Activated B cell treated with CpG ODN at 0.5 μM for 24 hours (primary cell): ENCODE measurements at regions of chr12 and their contacts with region 1.

Region 1: DNA sequence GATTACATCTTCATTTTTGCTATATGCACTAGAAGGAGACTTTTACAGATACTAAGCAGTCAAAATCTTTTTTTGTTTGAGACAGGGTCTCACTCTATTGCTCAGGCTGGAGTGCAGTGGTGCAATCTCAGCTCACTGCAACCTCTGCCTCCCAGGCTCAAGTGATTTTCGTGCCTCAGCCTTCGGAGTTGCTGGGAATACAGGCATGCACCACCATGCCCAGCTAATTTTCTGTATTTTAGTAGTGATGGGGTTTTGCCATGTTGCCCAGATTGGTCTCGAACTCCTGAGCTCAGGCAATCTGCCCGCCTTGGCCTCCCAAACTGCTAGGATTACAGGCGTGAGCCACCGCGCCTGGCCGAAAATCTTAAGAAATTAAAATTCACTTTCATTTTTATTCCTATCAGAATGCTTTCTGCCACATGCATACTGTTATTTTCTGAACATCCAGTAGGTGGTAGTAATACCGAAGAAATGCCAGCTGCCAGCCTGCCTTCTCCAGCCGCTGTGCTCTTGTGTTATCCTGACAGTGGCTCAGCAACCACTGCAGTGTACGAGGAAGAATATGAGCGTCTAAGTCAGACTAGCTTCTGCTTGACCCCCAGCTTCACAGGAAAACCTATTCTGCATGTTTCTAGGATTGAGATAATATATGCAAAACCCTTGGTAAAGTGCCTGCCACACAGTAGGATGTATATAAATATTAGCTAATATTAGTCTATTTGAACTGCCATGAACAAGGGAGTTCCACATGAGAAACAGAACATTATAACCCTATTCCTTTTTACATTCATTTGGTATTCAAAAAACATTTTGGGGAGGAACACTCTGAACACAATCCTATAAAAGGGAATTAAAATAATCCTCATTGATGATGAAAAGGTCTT is 54.2 kb downstream of the RPAP3 start:
- DNase-seq: no peak
- ATAC-seq: peak; percentile 90
- H3K4me3 Mint-ChIP-seq: no peak overlapping the region
- H3K27ac Mint-ChIP-seq: peak overlapping the region; percentile 35
- H3K4me1 Mint-ChIP-seq: peaks cover 15% of the 10 kb centered on the region
- H3K27me3 Mint-ChIP-seq: no peaks in the 10 kb centered on the region
- CTCF ChIP-seq: no peak

Region 2: GRCh38 chr12:46650607-46651088 is 1001.0 kb before region 1 on chr12:
- CTCF ChIA-PET with region 1: no interaction called
- POLR2A ChIA-PET with region 1: no interaction called
- intact Hi-C with region 1: no loop called
- DNase-seq: no peak
- ATAC-seq: no peak
- H3K4me3 Mint-ChIP-seq: no peak overlapping the region
- H3K27ac Mint-ChIP-seq: no peak overlapping the region
- H3K4me1 Mint-ChIP-seq: no peaks in the 10 kb centered on the region
- H3K27me3 Mint-ChIP-seq: no peaks in the 10 kb centered on the region
- CTCF ChIP-seq: no peak

Region 3: GRCh38 chr12:47307680-47308399 is 343.8 kb before region 1 on chr12:
- CTCF ChIA-PET with region 1: no interaction called
- POLR2A ChIA-PET with region 1: no interaction called
- intact Hi-C with region 1: no loop called
- DNase-seq: peak; percentile 33
- ATAC-seq: peak; percentile 88
- H3K4me3 Mint-ChIP-seq: peak overlapping the region; percentile 95
- H3K27ac Mint-ChIP-seq: peak overlapping the region; percentile 94
- H3K4me1 Mint-ChIP-seq: peaks cover 67% of the 10 kb centered on the region
- H3K27me3 Mint-ChIP-seq: no peaks in the 10 kb centered on the region
- CTCF ChIP-seq: peak; percentile 36

Region 4: GRCh38 chr12:47686645-47687240 is 35.1 kb after region 1 on chr12:
- CTCF ChIA-PET with region 1: interaction called, 4 read pairs
- POLR2A ChIA-PET with region 1: no interaction called
- intact Hi-C with region 1: loop called (anchors 1 kb)
- DNase-seq: no peak
- ATAC-seq: no peak
- H3K4me3 Mint-ChIP-seq: no peak overlapping the region
- H3K27ac Mint-ChIP-seq: no peak overlapping the region
- H3K4me1 Mint-ChIP-seq: peaks cover 8% of the 10 kb centered on the region
- H3K27me3 Mint-ChIP-seq: no peaks in the 10 kb centered on the region
- CTCF ChIP-seq: peak; percentile 21

Region 5: DNA sequence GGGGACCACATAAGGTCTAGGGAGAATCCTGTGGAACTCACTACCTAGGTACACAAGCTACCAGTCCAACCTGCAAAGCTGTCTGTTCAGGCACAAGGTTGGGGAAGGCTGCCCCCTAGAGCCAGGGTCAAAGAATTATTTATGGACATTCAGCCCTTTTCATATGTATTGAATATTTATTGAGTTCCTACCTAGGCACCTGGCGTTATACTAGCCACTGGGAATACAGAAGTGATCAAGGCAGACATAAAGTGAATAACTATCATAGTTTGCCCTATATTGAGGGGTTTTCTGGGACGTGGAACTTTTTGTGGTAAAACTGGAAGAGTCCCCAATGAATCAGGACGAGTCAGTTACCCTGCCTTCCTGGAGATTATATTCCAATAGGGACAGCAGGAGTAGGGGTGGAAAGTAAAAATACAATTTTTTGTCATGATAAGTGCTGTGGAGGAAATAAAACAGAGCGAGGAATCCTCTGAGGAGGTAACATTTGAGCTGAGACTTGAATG is 115.7 kb after region 1 on chr12:
- CTCF ChIA-PET with region 1: interaction called, 19 read pairs
- POLR2A ChIA-PET with region 1: no interaction called
- intact Hi-C with region 1: no loop called
- DNase-seq: peak; percentile 52
- ATAC-seq: peak; percentile 84
- H3K4me3 Mint-ChIP-seq: no peak overlapping the region
- H3K27ac Mint-ChIP-seq: no peak overlapping the region
- H3K4me1 Mint-ChIP-seq: peaks cover 9% of the 10 kb centered on the region
- H3K27me3 Mint-ChIP-seq: no peaks in the 10 kb centered on the region
- CTCF ChIP-seq: no peak

Region 6: GRCh38 chr12:47779301-47779942 is 127.8 kb after region 1 on chr12:
- CTCF ChIA-PET with region 1: interaction called, 3 read pairs
- POLR2A ChIA-PET with region 1: no interaction called
- intact Hi-C with region 1: loop called (anchors 1 kb)
- DNase-seq: peak; percentile 90
- ATAC-seq: peak; percentile 93
- H3K4me3 Mint-ChIP-seq: no peak overlapping the region
- H3K27ac Mint-ChIP-seq: peak overlapping the region; percentile 41
- H3K4me1 Mint-ChIP-seq: peaks cover 15% of the 10 kb centered on the region
- H3K27me3 Mint-ChIP-seq: no peaks in the 10 kb centered on the region
- CTCF ChIP-seq: no peak

Region 7: DNA sequence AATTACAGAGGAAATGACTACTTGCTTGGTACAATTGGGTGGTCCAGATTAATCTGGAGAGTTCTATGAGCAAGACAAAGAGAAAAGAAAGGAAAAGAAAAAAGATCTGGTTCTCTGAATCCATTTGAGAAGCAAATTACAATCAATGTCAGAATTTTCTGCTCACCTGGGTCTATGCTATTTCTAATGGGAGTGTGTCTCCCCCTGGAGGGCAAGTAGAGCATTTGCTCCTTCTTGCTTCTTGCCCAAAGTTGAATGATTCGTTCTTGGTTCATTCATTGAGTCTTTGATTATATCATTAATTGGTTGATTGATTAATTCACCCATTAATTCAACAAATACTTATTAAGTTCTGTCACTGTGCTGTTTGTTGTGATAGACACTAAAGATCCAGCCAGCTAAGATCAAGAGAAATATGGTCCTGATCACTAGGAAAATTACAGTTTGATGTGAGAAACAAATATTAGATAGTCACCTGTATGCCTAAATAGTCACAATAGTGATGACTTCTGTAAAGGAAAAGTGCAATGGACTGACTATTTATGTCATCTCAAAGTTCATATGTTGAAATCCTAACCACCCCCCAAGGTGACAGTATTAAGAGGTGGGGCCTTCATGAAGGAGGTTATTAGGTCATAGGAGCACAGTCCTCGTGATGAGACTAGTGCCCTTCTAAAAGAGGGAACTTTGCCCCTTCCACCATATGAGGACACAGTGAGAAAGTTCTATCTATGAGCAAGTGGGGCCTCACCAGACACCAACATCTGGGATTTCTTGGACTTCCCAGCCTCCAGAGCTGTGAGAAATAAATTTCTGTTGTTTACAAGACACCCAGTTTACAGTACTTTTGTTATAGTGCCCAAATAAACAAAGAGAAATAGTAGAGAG is 513.7 kb after region 1 on chr12:
- CTCF ChIA-PET with region 1: no interaction called
- POLR2A ChIA-PET with region 1: no interaction called
- intact Hi-C with region 1: loop called (anchors 2 kb)
- DNase-seq: no peak
- ATAC-seq: peak; percentile 73
- H3K4me3 Mint-ChIP-seq: no peak overlapping the region
- H3K27ac Mint-ChIP-seq: no peak overlapping the region
- H3K4me1 Mint-ChIP-seq: no peaks in the 10 kb centered on the region
- H3K27me3 Mint-ChIP-seq: peaks cover 12% of the 10 kb centered on the region
- CTCF ChIP-seq: peak; percentile 69